A549 (cell line): ENCODE measurements at regions of chr2 and their contacts with region 1.

Region 1: DNA sequence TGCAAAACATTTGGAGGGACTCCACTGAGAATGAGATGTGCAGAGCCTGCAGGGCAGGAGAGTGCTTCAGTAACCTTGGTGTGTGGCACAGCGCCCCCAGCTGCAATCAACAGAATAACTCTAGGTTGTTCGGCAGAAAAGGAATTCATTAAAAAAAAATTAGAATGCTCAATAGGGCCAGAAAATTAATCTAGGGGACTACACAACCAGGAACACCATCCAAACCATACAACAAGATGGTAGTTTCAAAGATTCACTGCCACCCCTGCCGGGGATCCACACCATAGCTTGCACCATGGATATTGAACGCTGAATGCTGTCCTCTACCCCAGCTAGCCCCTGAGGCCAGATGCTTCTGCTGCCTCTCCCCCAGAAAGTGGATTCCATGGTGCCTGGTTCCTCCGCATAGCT is 50.1 kb downstream of the THUMPD2 start:
- DNase-seq: peak; percentile 36 to 56
- ATAC-seq: peak in 1 of 2 experiments; percentile 82; a peak in 3 of 6 replicates
- H3K4me3 ChIP-seq: no peak overlapping the region
- H3K27ac ChIP-seq: no peak overlapping the region
- H3K4me1 ChIP-seq: no peaks in the 10 kb centered on the region
- CTCF ChIP-seq: peak; percentile 73
- EP300 ChIP-seq: no peak
- POLR2A ChIP-seq: no peak
- RAD21 ChIP-seq: peak; percentile 54 to 60

Region 2: GRCh38 chr2:39743269-39743776 is 14.4 kb after region 1 on chr2:
- CTCF ChIA-PET with region 1: interaction called, 22 read pairs
- POLR2A ChIA-PET with region 1: no interaction called
- DNase-seq: no peak
- ATAC-seq: no peak
- H3K4me3 ChIP-seq: no peak overlapping the region
- H3K27ac ChIP-seq: no peak overlapping the region
- H3K4me1 ChIP-seq: no peaks in the 10 kb centered on the region
- CTCF ChIP-seq: no peak
- EP300 ChIP-seq: no peak
- POLR2A ChIP-seq: no peak
- RAD21 ChIP-seq: no peak

Region 3: GRCh38 chr2:39755466-39755865 is 26.5 kb after region 1 on chr2:
- CTCF ChIA-PET with region 1: interaction called, 10 read pairs
- POLR2A ChIA-PET with region 1: no interaction called
- DNase-seq: no peak
- ATAC-seq: no peak
- H3K4me3 ChIP-seq: no peak overlapping the region
- H3K27ac ChIP-seq: no peak overlapping the region
- H3K4me1 ChIP-seq: no peaks in the 10 kb centered on the region
- CTCF ChIP-seq: no peak
- EP300 ChIP-seq: no peak
- POLR2A ChIP-seq: no peak
- RAD21 ChIP-seq: no peak

Region 4: GRCh38 chr2:40062381-40062780 is 333.4 kb after region 1 on chr2:
- CTCF ChIA-PET with region 1: no interaction called
- POLR2A ChIA-PET with region 1: no interaction called
- DNase-seq: no peak
- ATAC-seq: no peak
- H3K4me3 ChIP-seq: no peak overlapping the region
- H3K27ac ChIP-seq: no peak overlapping the region
- H3K4me1 ChIP-seq: no peaks in the 10 kb centered on the region
- CTCF ChIP-seq: no peak
- EP300 ChIP-seq: no peak
- POLR2A ChIP-seq: no peak
- RAD21 ChIP-seq: no peak